Activated CD4-positive, alpha-beta T cell treated with anti-CD3 and anti-CD28 coated beads, Interleukin-2, amount 10 ng/mL, durations not matched to agents 24 days and 14 days (primary cell): ENCODE measurements at regions of chr3 and their contacts with region 1.

Region 1: GRCh38 chr3:112136959-112137693 is 4.1 kb upstream of the GCSAM start:
- DNase-seq: peak; percentile 83
- H3K4me3 Mint-ChIP-seq: no peak overlapping the region
- H3K27ac Mint-ChIP-seq: no peak overlapping the region
- H3K4me1 Mint-ChIP-seq: peaks cover 46% of the 10 kb centered on the region
- H3K27me3 Mint-ChIP-seq: no peaks in the 10 kb centered on the region

Region 2: GRCh38 chr3:111547631-111548030 is 589.5 kb before region 1 on chr3:
- intact Hi-C with region 1: loop called (anchors 5 kb)
- DNase-seq: peak; percentile 87
- H3K4me3 Mint-ChIP-seq: no peak overlapping the region
- H3K27ac Mint-ChIP-seq: no peak overlapping the region
- H3K4me1 Mint-ChIP-seq: peaks cover 46% of the 10 kb centered on the region
- H3K27me3 Mint-ChIP-seq: no peaks in the 10 kb centered on the region

Region 3: GRCh38 chr3:112111785-112112402 is 25.2 kb before region 1 on chr3:
- intact Hi-C with region 1: loop called (anchors 2 kb)
- DNase-seq: peak; percentile 89
- H3K4me3 Mint-ChIP-seq: no peak overlapping the region
- H3K27ac Mint-ChIP-seq: peak overlapping the region; percentile 6
- H3K4me1 Mint-ChIP-seq: peaks cover 21% of the 10 kb centered on the region
- H3K27me3 Mint-ChIP-seq: no peaks in the 10 kb centered on the region

Region 4: DNA sequence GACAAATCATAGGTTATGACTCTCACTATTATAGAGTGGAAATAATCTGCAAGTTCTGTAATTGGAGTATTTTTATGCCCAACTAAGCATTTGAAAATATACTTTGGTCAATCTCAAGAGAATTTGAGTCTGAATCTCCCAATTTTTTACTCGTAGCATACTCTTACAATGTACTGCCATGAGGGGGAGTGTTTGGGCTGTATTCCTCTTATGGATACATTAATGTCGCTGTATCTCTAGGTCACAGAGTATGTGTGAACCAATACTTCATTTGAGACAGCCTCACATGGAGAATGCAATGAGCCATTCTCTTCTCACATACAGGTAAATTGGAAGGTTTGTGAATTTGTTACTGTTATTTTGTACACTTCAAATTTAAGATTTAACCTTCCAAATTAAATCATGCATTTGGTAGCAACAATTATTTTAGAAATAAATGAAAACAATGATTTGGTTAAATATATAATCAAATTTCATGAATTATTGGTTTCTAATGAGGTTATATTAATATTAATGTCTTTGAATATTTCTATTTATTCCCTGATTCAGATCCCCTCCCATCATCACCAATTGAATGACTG is 190.3 kb after region 1 on chr3:
- intact Hi-C with region 1: loop called (anchors 2 kb)
- DNase-seq: peak; percentile 87
- H3K4me3 Mint-ChIP-seq: no peak overlapping the region
- H3K27ac Mint-ChIP-seq: no peak overlapping the region
- H3K4me1 Mint-ChIP-seq: peaks cover 5% of the 10 kb centered on the region
- H3K27me3 Mint-ChIP-seq: peaks cover 8% of the 10 kb centered on the region

Region 5: DNA sequence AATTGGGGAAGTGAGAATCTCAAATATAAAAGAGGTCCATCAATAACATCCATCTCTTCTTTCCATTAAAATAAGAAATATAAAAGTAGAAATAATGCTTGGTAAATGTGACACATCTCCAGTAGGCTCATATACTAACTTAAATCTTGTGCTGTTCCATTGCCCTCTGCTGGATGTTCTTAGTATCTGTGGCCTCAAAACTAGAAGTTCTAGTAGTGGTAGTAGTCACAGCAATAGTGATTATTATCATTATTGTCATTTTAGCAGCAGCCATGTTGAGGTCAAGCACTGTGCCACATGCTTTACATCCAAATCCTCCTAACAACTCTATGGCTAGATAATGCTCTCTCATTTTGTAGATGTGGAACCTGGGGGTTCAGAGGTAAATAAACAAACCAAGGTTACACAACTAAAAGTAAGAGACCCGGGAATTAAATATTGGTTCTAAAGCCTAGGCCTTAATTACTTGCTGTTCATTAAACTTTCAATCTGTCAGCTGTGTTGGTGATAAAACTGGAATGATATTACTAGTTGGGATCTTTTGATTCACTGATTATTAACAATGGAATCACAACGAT is 382.4 kb after region 1 on chr3:
- intact Hi-C with region 1: loop called (anchors 1 kb)
- DNase-seq: peak; percentile 83
- H3K4me3 Mint-ChIP-seq: no peak overlapping the region
- H3K27ac Mint-ChIP-seq: no peak overlapping the region
- H3K4me1 Mint-ChIP-seq: peaks cover 20% of the 10 kb centered on the region
- H3K27me3 Mint-ChIP-seq: no peaks in the 10 kb centered on the region

Region 6: DNA sequence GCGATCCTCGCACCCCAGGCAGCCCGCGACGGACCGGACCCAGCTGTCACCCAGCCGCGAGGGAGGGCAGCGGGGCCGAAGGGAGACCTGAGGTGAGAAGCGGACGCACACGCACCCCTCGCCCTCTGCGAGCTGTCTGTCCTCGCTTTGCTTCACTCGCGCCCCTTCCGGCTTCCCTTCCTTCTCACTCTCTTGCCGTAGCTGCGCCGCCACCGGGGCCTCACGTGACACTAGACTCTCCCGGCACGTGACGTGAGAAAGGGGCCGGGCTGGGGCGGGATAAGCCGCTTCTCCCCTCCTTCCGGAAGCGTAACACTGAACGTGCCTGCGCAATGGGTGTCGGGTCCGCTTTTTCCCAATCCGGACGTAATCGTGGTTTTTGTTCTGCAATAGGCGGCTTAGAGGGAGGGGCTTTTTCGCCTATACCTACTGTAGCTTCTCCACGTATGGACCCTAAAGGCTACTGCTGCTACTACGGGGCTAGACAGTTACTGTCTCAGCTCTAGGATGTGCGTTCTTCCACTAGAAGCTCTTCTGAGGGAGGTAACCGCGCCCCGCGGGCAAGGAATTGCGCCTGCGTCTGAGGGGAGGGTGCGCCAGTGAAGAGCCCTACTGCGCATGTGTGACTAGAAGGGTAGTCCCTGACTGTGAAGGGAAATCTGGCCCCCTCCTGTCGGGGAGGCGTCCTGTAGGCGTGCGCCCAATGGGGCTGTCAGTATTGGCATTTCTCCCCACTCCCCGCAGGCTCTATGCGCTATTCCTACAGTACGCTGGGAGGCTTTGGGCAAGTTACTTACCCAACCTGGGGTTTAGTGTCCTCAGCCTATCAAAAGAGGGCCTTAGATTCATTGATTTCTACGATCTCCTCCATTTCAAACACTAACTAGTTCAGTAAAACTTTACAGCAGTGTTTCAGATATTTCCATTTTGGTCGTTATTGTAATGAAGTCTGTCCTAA is 424.9 kb after region 1 on chr3 and contains the starts of genes ATG3 and SLC35A5:
- intact Hi-C with region 1: loop called (anchors 2 kb)
- DNase-seq: peak; percentile 100
- H3K4me3 Mint-ChIP-seq: peak within 1 kb of the TSS; percentile 98
- H3K27ac Mint-ChIP-seq: peak within 1 kb of the TSS; percentile 99
- H3K4me1 Mint-ChIP-seq: peaks cover 24% of the 10 kb centered on the region
- H3K27me3 Mint-ChIP-seq: no peaks in the 10 kb centered on the region
- total RNA-seq, gene ATG3: 66.9 and 69.1 TPM in 2 replicates
- total RNA-seq, gene SLC35A5: 15.5 and 16.3 TPM in 2 replicates

Region 7: DNA sequence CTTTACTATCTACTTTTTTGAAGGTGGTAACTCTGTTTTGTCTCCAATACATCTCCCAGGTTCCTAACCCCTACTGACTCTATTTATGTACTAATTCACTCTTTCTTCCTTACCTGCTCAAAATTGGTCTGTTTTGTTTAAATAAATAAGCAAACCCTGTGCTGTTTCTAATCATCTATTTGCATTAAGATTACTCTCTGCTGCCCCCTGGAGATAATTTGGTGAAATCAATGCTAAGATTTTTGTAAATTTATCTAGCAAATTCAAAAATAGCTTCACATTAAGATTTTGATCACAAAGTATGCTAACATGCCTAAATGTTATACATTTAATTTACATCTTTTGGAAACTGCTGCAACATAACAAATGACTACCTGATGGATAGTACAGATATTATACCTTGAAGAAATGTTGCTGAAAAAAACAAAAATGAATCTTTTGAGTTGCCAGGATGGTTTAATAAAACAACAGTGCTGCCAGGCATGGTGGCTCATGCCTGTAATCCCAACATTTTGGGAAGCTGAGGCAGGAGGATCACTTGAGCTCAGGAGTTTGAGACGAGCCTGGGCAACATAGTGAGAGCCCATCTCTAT is 842.2 kb after region 1 on chr3:
- intact Hi-C with region 1: loop called (anchors 10 kb)
- DNase-seq: peak; percentile 76
- H3K4me3 Mint-ChIP-seq: no peak overlapping the region
- H3K27ac Mint-ChIP-seq: peak overlapping the region; percentile 7
- H3K4me1 Mint-ChIP-seq: peaks cover 46% of the 10 kb centered on the region
- H3K27me3 Mint-ChIP-seq: peaks cover 4% of the 10 kb centered on the region